ENCODE measurements at regions of chr9 and their contacts with region 1.

Region 1: DNA sequence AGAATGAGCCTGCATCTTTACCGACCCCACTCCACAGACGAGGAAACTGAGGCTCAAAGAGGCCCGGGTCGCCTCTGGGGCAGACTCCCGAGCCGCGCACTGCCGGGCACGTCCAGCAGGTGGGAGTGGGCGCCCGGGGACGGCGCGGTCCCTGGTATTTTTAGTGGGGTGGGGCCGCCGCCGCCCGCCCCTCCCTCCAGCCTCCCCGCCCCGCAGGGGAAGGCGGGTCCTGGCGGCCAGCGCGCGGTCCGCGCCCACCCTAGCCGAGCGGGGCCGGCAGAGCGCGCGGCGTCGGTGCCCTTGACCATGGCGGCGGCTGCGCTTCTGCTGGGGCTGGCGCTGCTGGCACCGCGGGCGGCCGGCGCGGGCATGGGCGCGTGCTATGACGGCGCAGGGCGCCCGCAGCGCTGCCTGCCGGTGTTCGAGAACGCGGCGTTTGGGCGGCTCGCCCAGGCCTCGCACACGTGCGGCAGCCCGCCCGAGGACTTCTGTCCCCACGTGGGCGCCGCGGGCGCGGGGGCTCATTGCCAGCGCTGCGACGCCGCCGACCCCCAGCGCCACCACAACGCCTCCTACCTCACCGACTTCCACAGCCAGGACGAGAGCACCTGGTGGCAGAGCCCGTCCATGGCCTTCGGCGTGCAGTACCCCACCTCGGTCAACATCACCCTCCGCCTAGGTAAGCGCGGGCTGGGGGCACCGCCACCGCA is at the start of gene LAMC3:
- DNase-seq: no peak
- ATAC-seq: peak; percentile 92
- H3K4me3 ChIP-seq: peak within 1 kb of the TSS; percentile 46 to 56
- H3K27ac ChIP-seq: no peak within 1 kb of the TSS
- H3K4me1 ChIP-seq: no peaks in the 10 kb centered on the region
- H3K27me3 ChIP-seq: no peaks in the 10 kb centered on the region
- CTCF ChIP-seq: peak; percentile 78
- total RNA-seq, gene LAMC3: 16.4 TPM

Region 2: GRCh38 chr9:131487621-131488031 is 478.6 kb after region 1 on chr9:
- CTCF ChIA-PET with region 1: interaction called, 13 read pairs
- POLR2A ChIA-PET with region 1: no interaction called
- in situ Hi-C with region 1: no loop called
- intact Hi-C with region 1: no loop called
- DNase-seq: no peak
- ATAC-seq: no peak
- H3K4me3 ChIP-seq: no peak overlapping the region
- H3K27ac ChIP-seq: no peak overlapping the region
- H3K4me1 ChIP-seq: no peaks in the 10 kb centered on the region
- H3K27me3 ChIP-seq: no peaks in the 10 kb centered on the region
- CTCF ChIP-seq: no peak